ENCODE measurements at regions of chr6 and their contacts with region 1.

Region 1: DNA sequence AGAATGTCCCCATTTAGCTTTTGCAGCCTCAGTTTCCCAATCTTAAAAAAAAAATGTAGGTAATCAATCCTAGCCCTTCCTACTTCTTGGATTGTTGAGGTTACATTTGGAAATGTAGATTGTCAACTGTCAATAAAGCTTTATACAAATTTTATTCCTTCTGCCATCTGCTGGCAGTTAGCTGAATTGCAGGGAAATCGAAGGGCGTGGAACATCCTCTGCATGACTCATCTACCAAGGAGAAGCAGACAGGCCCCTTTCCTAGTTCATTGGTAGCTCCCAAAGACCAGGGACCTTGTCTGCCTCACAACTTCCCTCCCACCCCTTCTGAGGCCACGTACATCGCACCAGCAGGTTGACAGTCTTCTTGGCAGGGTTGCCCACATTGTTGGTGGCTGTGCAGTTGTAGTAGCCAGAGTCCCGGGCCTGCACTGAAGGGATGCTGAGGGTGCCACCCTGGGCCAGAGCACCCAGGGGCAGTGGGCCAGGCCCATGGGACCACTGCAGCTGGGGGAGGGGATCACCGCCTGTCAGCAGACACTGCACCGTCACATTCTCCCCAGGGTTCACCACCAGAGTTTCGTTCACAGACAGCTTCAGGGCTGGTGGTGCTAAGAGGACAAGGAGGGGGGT is 43.6 kb downstream of the MDGA1 start:
- DNase-seq: peak; percentile 65
- ATAC-seq: peak; percentile 36
- H3K4me3 Mint-ChIP-seq: no peak overlapping the region
- H3K27ac Mint-ChIP-seq: no peak overlapping the region
- H3K4me1 Mint-ChIP-seq: peaks cover 5% of the 10 kb centered on the region
- H3K27me3 Mint-ChIP-seq: peaks cover 19% of the 10 kb centered on the region

Region 2: GRCh38 chr6:37207903-37208456 is 446.1 kb before region 1 on chr6:
- CTCF ChIA-PET with region 1: no interaction called
- DNase-seq: peak; percentile 97
- ATAC-seq: peak; percentile 85
- H3K4me3 Mint-ChIP-seq: peak overlapping the region; percentile 3
- H3K27ac Mint-ChIP-seq: peak overlapping the region; percentile 88
- H3K4me1 Mint-ChIP-seq: peaks cover 65% of the 10 kb centered on the region
- H3K27me3 Mint-ChIP-seq: no peaks in the 10 kb centered on the region

Region 3: GRCh38 chr6:37602346-37602745 is 51.7 kb before region 1 on chr6:
- CTCF ChIA-PET with region 1: no interaction called
- DNase-seq: no peak
- ATAC-seq: no peak
- H3K4me3 Mint-ChIP-seq: no peak overlapping the region
- H3K27ac Mint-ChIP-seq: no peak overlapping the region
- H3K4me1 Mint-ChIP-seq: no peaks in the 10 kb centered on the region
- H3K27me3 Mint-ChIP-seq: peaks cover 19% of the 10 kb centered on the region

Region 4: GRCh38 chr6:37665304-37665703 is 11.3 kb after region 1 on chr6:
- CTCF ChIA-PET with region 1: interaction called, 12 read pairs
- DNase-seq: no peak
- ATAC-seq: no peak
- H3K4me3 Mint-ChIP-seq: no peak overlapping the region
- H3K27ac Mint-ChIP-seq: no peak overlapping the region
- H3K4me1 Mint-ChIP-seq: no peaks in the 10 kb centered on the region
- H3K27me3 Mint-ChIP-seq: peaks cover under 1% of the 10 kb centered on the region